ENCODE measurements at regions of chr5 and their contacts with region 1.

Region 1: DNA sequence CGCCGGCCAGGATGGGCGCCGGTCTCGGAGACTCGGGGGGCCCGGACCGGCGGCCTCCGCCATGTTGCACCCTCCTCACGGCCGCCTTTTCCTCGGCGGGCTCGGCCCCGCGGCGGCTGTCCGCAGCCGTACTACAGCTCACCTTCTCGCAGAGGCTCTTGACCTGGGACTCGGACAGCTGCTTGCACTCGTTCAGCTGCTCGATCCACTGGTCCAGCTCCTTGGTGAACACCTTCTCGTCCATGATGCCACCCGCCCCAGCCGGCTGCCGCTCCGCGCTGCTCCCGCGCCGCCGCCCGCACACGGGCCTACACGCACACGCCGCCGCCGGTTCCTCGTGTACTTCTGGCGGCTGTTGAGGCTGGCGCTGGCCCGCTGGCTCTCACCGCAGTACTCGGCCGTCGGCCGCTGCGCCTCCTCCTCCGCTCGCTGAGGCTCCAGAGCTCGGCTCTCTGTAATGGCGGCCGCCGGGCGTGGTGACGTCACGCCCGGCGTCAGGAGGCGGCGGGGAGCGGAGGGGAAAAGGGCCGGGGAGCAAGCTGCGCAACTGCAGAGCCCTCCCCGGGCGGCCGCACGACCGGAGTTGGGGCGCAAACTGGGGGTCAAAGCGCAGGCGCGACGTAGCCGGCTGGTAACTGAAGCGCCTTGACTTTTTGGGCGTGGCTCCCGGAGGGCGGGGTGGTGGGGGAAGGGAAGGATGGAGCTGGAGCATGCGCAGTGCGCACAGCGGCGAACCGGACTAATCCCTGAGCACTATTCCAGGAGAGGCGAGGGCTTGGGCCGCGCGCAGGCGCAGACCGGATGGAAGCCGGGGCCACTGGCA is at the start of gene PPP2CA:
- DNase-seq: peak; percentile 100
- ATAC-seq: peak; percentile 77
- H3K4me3 ChIP-seq: peak within 1 kb of the TSS; percentile 87 to 100 (median 98)
- H3K4me3 Mint-ChIP-seq: peak within 1 kb of the TSS; percentile 94
- H3K27ac ChIP-seq: peak within 1 kb of the TSS; percentile 95 to 100
- H3K27ac Mint-ChIP-seq: peak within 1 kb of the TSS; percentile 99
- H3K4me1 ChIP-seq: peaks cover 36% of the 10 kb centered on the region in 2 donors
- H3K4me1 Mint-ChIP-seq: peaks cover 51% of the 10 kb centered on the region
- H3K27me3 ChIP-seq: no peaks in the 10 kb centered on the region
- H3K27me3 Mint-ChIP-seq: no peaks in the 10 kb centered on the region
- CTCF ChIP-seq: peak; percentile 27
- total RNA-seq, gene PPP2CA: 86.2 and 100 TPM in 2 replicates

Region 2: GRCh38 chr5:134176511-134177368 is 49.1 kb before region 1 on chr5 and contains the start of gene SKP1:
- CTCF ChIA-PET with region 1: interaction called, 11 read pairs
- POLR2A ChIA-PET with region 1: interaction called, 35 read pairs
- intact Hi-C with region 1: loop called (anchors 1 kb)
- DNase-seq: peak; percentile 95
- ATAC-seq: peak; percentile 86
- H3K4me3 ChIP-seq: peak within 1 kb of the TSS; percentile 73 to 100 (median 93)
- H3K4me3 Mint-ChIP-seq: peak within 1 kb of the TSS; percentile 96
- H3K27ac ChIP-seq: peak within 1 kb of the TSS; percentile 98 to 100
- H3K27ac Mint-ChIP-seq: peak within 1 kb of the TSS; percentile 98
- H3K4me1 ChIP-seq: peaks cover 25 to 27% of the 10 kb centered on the region in 2 donors
- H3K4me1 Mint-ChIP-seq: peaks cover 29% of the 10 kb centered on the region
- H3K27me3 ChIP-seq: no peaks in the 10 kb centered on the region
- H3K27me3 Mint-ChIP-seq: no peaks in the 10 kb centered on the region
- CTCF ChIP-seq: no peak
- total RNA-seq, gene SKP1: 182 and 186 TPM in 2 replicates

Region 3: GRCh38 chr5:134240421-134240962 is 14.7 kb after region 1 on chr5:
- CTCF ChIA-PET with region 1: no interaction called
- POLR2A ChIA-PET with region 1: no interaction called
- intact Hi-C with region 1: no loop called
- DNase-seq: peak; percentile 22
- ATAC-seq: peak; percentile 47
- H3K4me3 ChIP-seq: no peak overlapping the region
- H3K4me3 Mint-ChIP-seq: no peak overlapping the region
- H3K27ac ChIP-seq: peak overlapping the region in 1 of 2 donors; percentile 12
- H3K27ac Mint-ChIP-seq: no peak overlapping the region
- H3K4me1 ChIP-seq: peaks cover 0 to 9% of the 10 kb centered on the region in 2 donors
- H3K4me1 Mint-ChIP-seq: peaks cover 7% of the 10 kb centered on the region
- H3K27me3 ChIP-seq: peaks cover 0 to 3% (median 0%) of the 10 kb centered on the region in 4 experiments
- H3K27me3 Mint-ChIP-seq: no peaks in the 10 kb centered on the region
- CTCF ChIP-seq: no peak

Region 4: DNA sequence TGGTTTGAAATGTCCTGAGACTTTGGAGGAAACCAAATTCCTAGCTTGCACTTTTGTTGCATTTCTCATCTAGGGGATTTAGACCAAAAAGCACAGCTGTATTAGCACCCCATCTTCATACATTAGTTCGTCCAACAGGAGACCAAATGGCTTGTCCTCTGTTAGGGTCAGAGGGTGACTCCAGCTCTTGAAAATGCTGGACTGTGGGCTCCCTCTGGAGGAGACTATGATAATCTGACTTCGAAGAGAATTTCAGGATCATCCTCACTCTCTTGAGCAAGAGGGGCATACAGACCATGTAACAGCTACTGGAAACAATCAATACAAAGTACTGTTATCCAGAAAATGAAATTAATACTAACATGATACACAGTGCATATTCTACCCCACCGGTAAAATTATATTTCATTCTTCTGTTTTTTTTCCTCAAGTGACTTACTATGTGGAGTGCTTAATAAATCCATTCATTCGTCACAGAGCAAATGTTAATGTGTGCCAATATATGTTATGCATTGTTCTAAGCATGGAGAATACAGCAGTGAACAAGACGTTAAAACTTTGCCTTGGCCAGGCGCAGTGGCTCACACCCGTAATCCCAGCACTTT is 63.8 kb after region 1 on chr5:
- CTCF ChIA-PET with region 1: interaction called, 10 read pairs
- POLR2A ChIA-PET with region 1: no interaction called
- intact Hi-C with region 1: no loop called
- DNase-seq: peak; percentile 72
- ATAC-seq: peak; percentile 72
- H3K4me3 ChIP-seq: no peak overlapping the region
- H3K4me3 Mint-ChIP-seq: no peak overlapping the region
- H3K27ac ChIP-seq: no peak overlapping the region
- H3K27ac Mint-ChIP-seq: no peak overlapping the region
- H3K4me1 ChIP-seq: no peaks in the 10 kb centered on the region
- H3K4me1 Mint-ChIP-seq: no peaks in the 10 kb centered on the region
- H3K27me3 ChIP-seq: peaks cover 0 to 5% (median 0%) of the 10 kb centered on the region in 4 experiments
- H3K27me3 Mint-ChIP-seq: peaks cover 28% of the 10 kb centered on the region
- CTCF ChIP-seq: peak; percentile 63

Region 5: GRCh38 chr5:134555890-134556311 is 330.1 kb after region 1 on chr5:
- CTCF ChIA-PET with region 1: no interaction called
- POLR2A ChIA-PET with region 1: interaction called, 3 read pairs
- intact Hi-C with region 1: loop called (anchors 1 kb)
- DNase-seq: peak; percentile 83
- ATAC-seq: peak; percentile 64
- H3K4me3 ChIP-seq: peak overlapping the region in 1 of 5 experiments; percentile 32
- H3K4me3 Mint-ChIP-seq: peak overlapping the region; percentile 83
- H3K27ac ChIP-seq: peak overlapping the region; percentile 86 to 98
- H3K27ac Mint-ChIP-seq: peak overlapping the region; percentile 97
- H3K4me1 ChIP-seq: peaks cover 37 to 58% of the 10 kb centered on the region in 2 donors
- H3K4me1 Mint-ChIP-seq: peaks cover 62% of the 10 kb centered on the region
- H3K27me3 ChIP-seq: no peaks in the 10 kb centered on the region
- H3K27me3 Mint-ChIP-seq: no peaks in the 10 kb centered on the region
- CTCF ChIP-seq: no peak

Region 6: GRCh38 chr5:134648425-134649162 is 422.8 kb after region 1 on chr5 and contains the start of gene SEC24A:
- CTCF ChIA-PET with region 1: no interaction called
- POLR2A ChIA-PET with region 1: interaction called, 4 read pairs
- intact Hi-C with region 1: loop called (anchors 1 kb)
- DNase-seq: peak; percentile 94
- ATAC-seq: peak; percentile 83
- H3K4me3 ChIP-seq: peak within 1 kb of the TSS; percentile 80 to 91 (median 88)
- H3K4me3 Mint-ChIP-seq: peak within 1 kb of the TSS; percentile 96
- H3K27ac ChIP-seq: peak within 1 kb of the TSS; percentile 94 to 99
- H3K27ac Mint-ChIP-seq: peak within 1 kb of the TSS; percentile 94
- H3K4me1 ChIP-seq: peaks cover 17 to 18% of the 10 kb centered on the region in 2 donors
- H3K4me1 Mint-ChIP-seq: peaks cover 24% of the 10 kb centered on the region
- H3K27me3 ChIP-seq: no peaks in the 10 kb centered on the region
- H3K27me3 Mint-ChIP-seq: no peaks in the 10 kb centered on the region
- CTCF ChIP-seq: no peak
- total RNA-seq, gene SEC24A: 13.0 and 14.3 TPM in 2 replicates

Region 7: DNA sequence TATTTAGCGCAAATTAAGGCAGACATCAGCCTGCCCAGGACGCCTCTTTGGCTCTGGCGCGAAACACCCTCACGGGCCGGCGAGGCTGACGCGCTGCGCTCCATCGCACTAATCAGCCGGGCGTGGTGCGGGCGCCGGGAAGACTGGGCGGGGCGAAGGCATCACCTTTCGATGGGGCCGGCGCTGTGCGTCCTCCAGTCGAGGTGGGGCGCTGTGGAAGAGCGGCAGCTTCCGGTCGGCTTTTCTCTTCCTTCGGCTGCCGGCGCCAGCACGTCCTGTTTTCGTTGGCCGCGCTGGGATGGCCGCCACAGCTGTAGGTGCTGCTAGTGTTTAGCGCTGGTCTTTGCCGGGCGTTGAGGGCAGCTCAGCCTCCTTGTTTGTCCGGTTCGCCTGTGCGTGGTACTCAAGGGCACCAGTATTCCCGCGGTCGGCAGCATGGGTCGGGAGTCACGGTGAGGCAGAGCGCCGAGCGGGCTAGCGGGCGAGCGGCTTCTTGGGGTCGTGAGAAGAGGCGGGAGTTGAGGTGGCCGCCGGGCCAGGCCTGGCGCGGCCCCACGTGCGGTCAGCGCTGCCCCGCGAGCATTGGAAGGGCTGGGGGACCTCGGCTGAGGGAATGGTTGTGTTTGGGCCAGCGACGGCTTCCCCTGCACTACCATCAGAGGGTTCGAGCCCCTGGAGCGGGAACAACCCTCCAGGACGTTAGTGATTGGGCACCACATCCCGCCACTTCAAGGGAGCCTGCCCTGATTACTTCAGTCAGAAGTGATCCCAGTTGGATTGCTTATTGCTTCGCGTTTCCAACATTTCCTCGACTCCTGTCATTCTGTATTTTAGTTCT is 532.9 kb after region 1 on chr5 and contains the start of gene DDX46:
- CTCF ChIA-PET with region 1: no interaction called
- POLR2A ChIA-PET with region 1: no interaction called
- intact Hi-C with region 1: loop called (anchors 5 kb)
- DNase-seq: peak; percentile 95
- ATAC-seq: peak; percentile 99
- H3K4me3 ChIP-seq: peak within 1 kb of the TSS; percentile 77 to 97 (median 86)
- H3K4me3 Mint-ChIP-seq: peak within 1 kb of the TSS; percentile 100
- H3K27ac ChIP-seq: peak within 1 kb of the TSS; percentile 54 to 80
- H3K27ac Mint-ChIP-seq: peak within 1 kb of the TSS; percentile 97
- H3K4me1 ChIP-seq: peaks cover 18 to 19% of the 10 kb centered on the region in 2 donors
- H3K4me1 Mint-ChIP-seq: peaks cover 36% of the 10 kb centered on the region
- H3K27me3 ChIP-seq: no peaks in the 10 kb centered on the region
- H3K27me3 Mint-ChIP-seq: no peaks in the 10 kb centered on the region
- CTCF ChIP-seq: peak; percentile 78
- total RNA-seq, gene DDX46: 75.7 and 80.9 TPM in 2 replicates

Measured in B cell (primary cell).